BJ (cell line): ENCODE measurements at regions of chr6 and their contacts with region 1.

Region 1: GRCh38 chr6:111625461-111626391 is 20.0 kb upstream of the TRAF3IP2 start:
- DNase-seq: no peak
- H3K4me3 ChIP-seq: no peak overlapping the region
- H3K27me3 ChIP-seq: no peaks in the 10 kb centered on the region
- CTCF ChIP-seq: no peak

Region 2: GRCh38 chr6:111555036-111555435 is 70.7 kb before region 1 on chr6:
- CTCF ChIA-PET with region 1: no interaction called
- POLR2A ChIA-PET with region 1: interaction called, 25 read pairs
- DNase-seq: peak; percentile 73
- H3K4me3 ChIP-seq: no peak overlapping the region
- H3K27me3 ChIP-seq: no peaks in the 10 kb centered on the region
- CTCF ChIP-seq: no peak

Region 3: GRCh38 chr6:111605100-111605751 is 20.5 kb before region 1 on chr6:
- CTCF ChIA-PET with region 1: interaction called, 14 read pairs
- POLR2A ChIA-PET with region 1: no interaction called
- DNase-seq: peak; percentile 77
- H3K4me3 ChIP-seq: peak overlapping the region; percentile 57
- H3K27me3 ChIP-seq: no peaks in the 10 kb centered on the region
- CTCF ChIP-seq: no peak